Colonic mucosa (tissue), 4 donors: ENCODE measurements at regions of chr17 and their contacts with region 1.

Region 1: GRCh38 chr17:28644985-28645939 is at the start of gene BLTP2:
- DNase-seq: peak; percentile 97
- H3K4me3 ChIP-seq: peak within 1 kb of the TSS; percentile 83
- H3K27ac ChIP-seq: peak within 1 kb of the TSS; percentile 97
- H3K4me1 ChIP-seq: peaks cover 7% of the 10 kb centered on the region
- H3K27me3 ChIP-seq: no peaks in the 10 kb centered on the region
- CTCF ChIP-seq: no peak
- total RNA-seq, gene BLTP2: 114 to 202 TPM

Region 2: GRCh38 chr17:28545787-28546415 is 99.4 kb before region 1 on chr17:
- intact Hi-C with region 1: no loop called
- DNase-seq: no peak
- H3K4me3 ChIP-seq: no peak overlapping the region
- H3K27ac ChIP-seq: no peak overlapping the region
- H3K4me1 ChIP-seq: no peaks in the 10 kb centered on the region
- H3K27me3 ChIP-seq: no peaks in the 10 kb centered on the region
- CTCF ChIP-seq: no peak

Region 3: DNA sequence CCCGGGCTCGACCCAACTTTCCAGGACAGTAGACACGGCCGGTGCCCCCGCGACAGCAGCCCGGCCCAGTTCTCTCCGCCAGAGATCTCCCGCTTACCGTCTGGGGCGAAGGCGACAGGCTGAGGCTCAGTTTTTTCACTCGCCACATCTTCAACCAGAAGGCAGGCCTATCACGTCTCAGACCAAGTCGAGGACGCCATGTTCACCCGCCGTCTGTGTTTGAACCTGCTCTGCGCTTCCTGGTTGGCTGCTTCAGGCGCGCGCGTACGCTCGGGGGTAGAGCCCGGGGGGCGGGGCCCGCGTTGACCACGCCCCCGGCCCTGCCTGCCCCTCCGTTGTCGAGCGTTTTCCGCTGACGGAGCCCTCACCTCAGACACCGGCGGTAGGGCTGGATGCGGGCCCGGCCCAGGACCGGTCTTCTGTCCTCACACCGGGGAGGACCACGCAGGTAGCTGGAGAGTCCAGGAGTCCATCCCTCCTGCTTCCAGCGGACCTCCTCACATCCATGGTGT is 46.4 kb before region 1 on chr17 and contains the start of gene SPAG5:
- intact Hi-C with region 1: loop called (anchors 5 kb)
- DNase-seq: peak; percentile 95
- H3K4me3 ChIP-seq: peak within 1 kb of the TSS; percentile 59
- H3K27ac ChIP-seq: peak within 1 kb of the TSS; percentile 95
- H3K4me1 ChIP-seq: peaks cover 8% of the 10 kb centered on the region
- H3K27me3 ChIP-seq: no peaks in the 10 kb centered on the region
- CTCF ChIP-seq: no peak
- total RNA-seq, gene SPAG5: 25.6 to 81.8 TPM

Region 4: GRCh38 chr17:28726226-28727130 is 81.2 kb after region 1 on chr17 and contains the start of gene TLCD1:
- intact Hi-C with region 1: loop called (anchors 10 kb)
- DNase-seq: peak; percentile 97
- H3K4me3 ChIP-seq: peak within 1 kb of the TSS; percentile 81
- H3K27ac ChIP-seq: peak within 1 kb of the TSS; percentile 99
- H3K4me1 ChIP-seq: peaks cover 19% of the 10 kb centered on the region
- H3K27me3 ChIP-seq: no peaks in the 10 kb centered on the region
- CTCF ChIP-seq: peak; percentile 98
- total RNA-seq, gene TLCD1: 5.7 to 20.4 TPM

Region 5: DNA sequence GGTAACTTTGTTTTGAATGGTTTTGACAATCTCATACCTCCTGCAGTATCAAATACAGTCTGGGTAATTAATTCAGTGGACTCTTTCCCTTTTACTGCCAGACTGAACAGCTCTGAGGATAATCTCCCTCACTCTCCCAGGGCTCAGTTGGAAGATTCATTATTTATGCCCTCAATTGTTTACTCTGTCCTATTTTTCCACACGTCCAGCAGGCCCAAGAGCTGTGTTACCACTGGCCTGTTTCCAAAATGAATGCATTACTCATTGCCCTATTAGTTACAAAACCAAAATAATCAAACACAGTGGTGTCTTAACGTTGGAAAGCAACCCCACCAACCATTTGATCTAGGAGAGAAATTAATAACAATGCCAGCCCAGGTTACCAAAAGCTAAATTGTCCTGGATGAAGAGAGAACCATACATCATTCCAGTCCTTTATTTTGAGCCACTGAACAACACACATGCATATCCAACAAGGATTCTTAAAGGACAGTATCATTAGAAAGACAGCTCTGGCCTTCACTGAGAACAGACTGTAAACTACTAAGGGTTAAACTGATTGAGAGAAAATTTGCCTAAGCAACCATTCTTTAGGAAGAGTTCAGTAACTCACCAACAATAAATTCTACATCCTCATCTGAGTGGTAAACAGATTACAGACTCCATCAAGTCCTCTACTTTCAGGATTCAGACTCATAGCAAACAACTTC is 162.8 kb after region 1 on chr17:
- intact Hi-C with region 1: no loop called
- DNase-seq: no peak
- H3K4me3 ChIP-seq: no peak overlapping the region
- H3K27ac ChIP-seq: peak overlapping the region; percentile 65
- H3K4me1 ChIP-seq: peaks cover 22% of the 10 kb centered on the region
- H3K27me3 ChIP-seq: no peaks in the 10 kb centered on the region
- CTCF ChIP-seq: no peak